WTC11 (cell line): ENCODE measurements at regions of chr17 and their contacts with region 1.

Region 1: DNA sequence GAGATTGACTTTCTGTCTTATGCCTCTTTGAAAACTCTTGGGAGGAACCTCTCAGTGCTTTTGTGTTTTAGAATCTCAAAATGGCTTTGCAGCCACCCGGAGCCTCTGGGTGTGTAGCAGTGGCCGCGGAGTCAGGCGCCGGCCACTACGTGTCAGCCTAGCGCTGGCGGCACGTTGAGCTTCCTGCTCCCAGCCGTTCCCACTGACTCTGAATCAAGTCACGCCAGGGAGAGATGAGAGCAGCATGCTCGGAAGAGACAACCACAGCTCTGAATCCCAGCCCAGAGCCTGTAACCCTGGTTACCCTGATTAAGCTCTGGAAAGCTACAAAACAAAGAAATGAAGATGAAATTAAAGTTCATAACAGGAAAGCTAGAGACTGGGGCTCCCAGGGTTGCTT is 97.4 kb upstream of the CACNG5 start:
- DNase-seq: peak; percentile 54
- ATAC-seq: peak; percentile 96
- H3K4me3 Mint-ChIP-seq: no peak overlapping the region
- H3K27ac Mint-ChIP-seq: no peak overlapping the region
- H3K4me1 Mint-ChIP-seq: peaks cover 22% of the 10 kb centered on the region
- H3K27me3 Mint-ChIP-seq: no peaks in the 10 kb centered on the region
- CTCF ChIP-seq: no peak

Region 2: DNA sequence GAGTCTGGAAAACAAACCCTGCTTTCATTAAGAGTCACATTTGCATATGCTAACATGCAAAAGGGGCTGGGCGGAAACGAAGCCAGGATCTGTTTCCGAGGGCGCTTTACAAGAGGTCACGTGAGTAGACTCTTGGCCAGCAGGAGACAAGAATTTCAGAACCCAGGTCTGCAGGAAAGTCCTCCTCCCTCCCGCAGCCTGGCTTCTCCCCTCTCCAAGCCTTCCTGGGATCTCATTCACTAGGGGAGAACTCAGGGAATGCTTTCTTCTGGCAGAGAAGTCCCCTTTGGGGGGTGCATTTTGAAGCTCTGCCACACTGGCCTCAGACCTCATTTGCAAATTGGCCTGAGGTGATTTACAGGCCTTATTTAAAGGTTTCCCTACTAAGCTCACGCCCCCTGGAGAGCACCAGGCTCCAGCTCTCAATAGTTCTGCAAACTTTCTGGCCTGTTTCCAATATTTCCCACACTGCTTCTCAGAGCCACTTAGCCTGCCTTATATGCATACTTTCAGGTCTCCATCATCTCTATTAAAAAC is 40.2 kb after region 1 on chr17:
- CTCF ChIA-PET with region 1: interaction called, 10 read pairs
- POLR2A ChIA-PET with region 1: interaction called, 3 read pairs
- DNase-seq: peak; percentile 80
- ATAC-seq: peak; percentile 86
- H3K4me3 Mint-ChIP-seq: peak overlapping the region; percentile 55
- H3K27ac Mint-ChIP-seq: peak overlapping the region; percentile 100
- H3K4me1 Mint-ChIP-seq: peaks cover 69% of the 10 kb centered on the region
- H3K27me3 Mint-ChIP-seq: no peaks in the 10 kb centered on the region
- CTCF ChIP-seq: no peak

Region 3: DNA sequence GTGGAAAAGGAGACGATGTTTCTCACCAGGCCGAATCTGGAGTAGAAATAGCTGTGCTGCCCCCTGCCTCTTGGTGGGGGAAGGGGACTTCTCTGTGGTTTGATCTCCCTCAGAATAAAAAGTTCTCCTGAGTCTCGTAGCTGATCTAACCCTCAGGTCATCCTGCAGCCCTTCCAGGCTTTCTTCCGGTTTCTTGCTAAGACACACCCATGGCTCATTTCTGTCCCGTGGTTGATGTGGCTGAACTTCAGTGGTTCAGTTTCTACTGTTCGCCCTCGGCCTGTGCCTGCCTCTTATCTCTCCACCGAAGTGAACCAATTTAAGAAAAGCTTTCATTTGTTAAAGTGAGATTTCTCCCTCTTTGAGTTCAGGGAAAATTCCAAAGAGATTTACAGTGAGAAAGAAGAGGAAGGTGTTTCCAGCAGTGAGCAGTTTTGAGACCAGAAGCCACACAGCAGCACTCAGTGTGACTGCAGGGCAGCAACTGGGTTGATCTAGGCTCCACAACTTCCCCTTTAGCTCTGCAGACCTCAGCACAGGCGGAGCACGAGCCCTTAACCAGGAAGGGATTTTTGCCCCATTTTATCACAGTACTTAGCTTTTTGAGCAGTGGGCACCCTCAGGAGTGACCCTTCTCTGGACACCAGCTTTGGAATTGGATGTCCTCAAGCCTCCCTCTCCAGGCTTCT is 62.5 kb after region 1 on chr17:
- CTCF ChIA-PET with region 1: interaction called, 10 read pairs
- POLR2A ChIA-PET with region 1: no interaction called
- DNase-seq: no peak
- ATAC-seq: no peak
- H3K4me3 Mint-ChIP-seq: no peak overlapping the region
- H3K27ac Mint-ChIP-seq: no peak overlapping the region
- H3K4me1 Mint-ChIP-seq: peaks cover 28% of the 10 kb centered on the region
- H3K27me3 Mint-ChIP-seq: no peaks in the 10 kb centered on the region; the same call in 1 of the 2 replicates
- CTCF ChIP-seq: no peak

Region 4: DNA sequence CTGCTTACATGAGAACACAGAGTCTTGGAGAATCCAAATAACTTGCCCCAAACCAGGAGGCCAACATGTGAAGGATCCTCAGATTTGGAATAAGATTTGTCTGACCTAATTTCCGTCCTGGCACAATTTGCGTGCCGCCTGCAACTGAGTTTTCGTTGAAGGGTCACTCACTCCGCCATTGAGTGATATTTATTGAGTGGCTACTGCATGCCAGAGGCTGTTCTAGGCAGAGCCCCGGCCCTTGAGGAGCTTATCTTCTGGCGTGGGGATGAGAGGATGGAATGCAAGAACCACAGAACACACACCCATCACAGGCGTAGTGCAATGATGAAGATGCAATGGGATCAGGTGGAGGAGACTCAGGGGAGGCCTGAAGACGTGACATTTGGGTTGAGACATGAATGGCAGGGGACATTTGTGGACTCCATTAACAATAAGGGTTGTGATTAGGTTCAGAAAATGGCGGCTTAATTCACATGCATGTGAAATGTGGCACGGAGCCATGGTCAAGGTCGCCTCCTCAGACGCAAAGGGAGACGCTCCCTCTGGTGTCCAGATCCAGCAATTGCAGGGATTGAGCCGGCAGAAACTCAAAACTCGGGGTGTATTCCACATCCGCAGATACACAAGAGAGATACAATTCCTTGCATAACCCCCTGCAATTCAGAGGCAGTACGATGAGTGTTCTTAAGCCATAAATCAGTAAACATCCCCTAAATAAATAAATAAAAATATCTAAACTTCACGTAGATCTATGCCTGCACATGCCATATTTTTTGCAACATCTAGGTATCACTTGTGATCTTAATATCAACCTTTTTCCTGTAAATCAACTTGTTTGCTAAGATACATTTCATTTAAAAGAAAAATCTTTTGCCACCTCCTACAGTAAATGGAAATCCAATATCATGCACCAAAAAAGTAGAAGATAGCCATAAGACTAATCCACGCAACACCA is 169.1 kb after region 1 on chr17:
- CTCF ChIA-PET with region 1: interaction called, 10 read pairs
- POLR2A ChIA-PET with region 1: no interaction called
- DNase-seq: peak; percentile 81
- ATAC-seq: peak; percentile 81
- H3K4me3 Mint-ChIP-seq: no peak overlapping the region
- H3K27ac Mint-ChIP-seq: no peak overlapping the region
- H3K4me1 Mint-ChIP-seq: no peaks in the 10 kb centered on the region
- H3K27me3 Mint-ChIP-seq: peaks cover 8% of the 10 kb centered on the region; the same call in 1 of the 2 replicates
- CTCF ChIP-seq: peak; percentile 86